Panc1 (cell line): ENCODE measurements at regions of chr17 and their contacts with region 1.

Region 1: GRCh38 chr17:81428948-81429774 is 33.9 kb downstream of the BAHCC1 start:
- DNase-seq: no peak
- ATAC-seq: peak; percentile 72
- H3K4me3 ChIP-seq: no peak overlapping the region
- H3K27ac ChIP-seq: peak overlapping the region; percentile 83
- H3K4me1 ChIP-seq: peaks cover 67% of the 10 kb centered on the region
- H3K27me3 ChIP-seq: no peaks in the 10 kb centered on the region
- CTCF ChIP-seq: no peak

Region 2: GRCh38 chr17:81440876-81441244 is 11.7 kb after region 1 on chr17:
- CTCF ChIA-PET with region 1: interaction called, 14 read pairs
- POLR2A ChIA-PET with region 1: no interaction called
- in situ Hi-C with region 1: no loop called
- intact Hi-C with region 1: no loop called
- DNase-seq: no peak
- ATAC-seq: peak; percentile 31; the same call in 1 of the 2 replicates
- H3K4me3 ChIP-seq: no peak overlapping the region
- H3K27ac ChIP-seq: no peak overlapping the region
- H3K4me1 ChIP-seq: peaks cover 36% of the 10 kb centered on the region
- H3K27me3 ChIP-seq: no peaks in the 10 kb centered on the region
- CTCF ChIP-seq: peak; percentile 93

Region 3: DNA sequence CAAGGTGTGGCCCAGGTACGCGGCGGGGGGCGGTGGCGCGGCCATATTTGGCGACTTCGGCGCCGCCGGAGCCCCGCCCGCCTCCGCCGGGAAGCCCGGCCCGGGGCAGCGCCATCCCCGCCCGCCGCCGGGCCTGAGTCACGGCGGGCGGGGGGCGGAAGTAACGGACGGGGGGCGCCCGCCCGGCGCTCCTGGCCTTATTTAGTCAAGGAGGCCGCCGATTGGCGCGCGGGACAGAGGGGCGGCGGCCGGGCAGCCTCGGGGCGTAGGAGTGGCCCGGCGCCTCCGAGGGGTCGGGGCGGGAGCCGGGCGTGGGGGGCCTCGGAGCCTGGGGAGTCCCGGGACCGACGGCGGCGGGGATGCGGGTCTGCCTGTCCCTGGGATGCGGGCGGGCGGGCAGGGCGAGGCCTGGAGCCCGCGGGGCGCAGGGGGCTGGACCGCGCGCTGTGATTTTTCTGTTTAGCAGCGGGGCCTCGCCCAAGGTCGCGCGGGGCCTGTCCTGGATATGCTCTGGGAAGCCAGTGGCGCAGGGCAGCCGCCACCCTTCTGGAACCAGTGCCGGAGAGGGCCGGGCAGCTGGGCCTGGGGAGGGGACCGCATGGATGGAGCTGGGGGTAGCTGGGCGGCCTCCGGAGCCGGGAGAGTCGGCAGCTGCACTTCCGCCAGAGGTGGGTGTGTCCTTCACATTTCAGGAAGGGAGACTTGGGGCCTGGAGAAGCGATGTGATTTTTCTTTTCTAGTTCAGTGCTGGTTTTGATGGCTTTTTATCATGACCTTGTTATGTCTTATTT is 85.8 kb after region 1 on chr17:
- CTCF ChIA-PET with region 1: no interaction called
- POLR2A ChIA-PET with region 1: interaction called, 11 read pairs
- in situ Hi-C with region 1: no loop called
- intact Hi-C with region 1: no loop called
- DNase-seq: no peak
- ATAC-seq: peak; percentile 35
- H3K4me3 ChIP-seq: peak overlapping the region; percentile 68 to 82
- H3K27ac ChIP-seq: peak overlapping the region; percentile 93
- H3K4me1 ChIP-seq: peaks cover 32% of the 10 kb centered on the region
- H3K27me3 ChIP-seq: no peaks in the 10 kb centered on the region
- CTCF ChIP-seq: no peak